ENCODE measurements at regions of chr10 and their contacts with region 1.

Region 1: DNA sequence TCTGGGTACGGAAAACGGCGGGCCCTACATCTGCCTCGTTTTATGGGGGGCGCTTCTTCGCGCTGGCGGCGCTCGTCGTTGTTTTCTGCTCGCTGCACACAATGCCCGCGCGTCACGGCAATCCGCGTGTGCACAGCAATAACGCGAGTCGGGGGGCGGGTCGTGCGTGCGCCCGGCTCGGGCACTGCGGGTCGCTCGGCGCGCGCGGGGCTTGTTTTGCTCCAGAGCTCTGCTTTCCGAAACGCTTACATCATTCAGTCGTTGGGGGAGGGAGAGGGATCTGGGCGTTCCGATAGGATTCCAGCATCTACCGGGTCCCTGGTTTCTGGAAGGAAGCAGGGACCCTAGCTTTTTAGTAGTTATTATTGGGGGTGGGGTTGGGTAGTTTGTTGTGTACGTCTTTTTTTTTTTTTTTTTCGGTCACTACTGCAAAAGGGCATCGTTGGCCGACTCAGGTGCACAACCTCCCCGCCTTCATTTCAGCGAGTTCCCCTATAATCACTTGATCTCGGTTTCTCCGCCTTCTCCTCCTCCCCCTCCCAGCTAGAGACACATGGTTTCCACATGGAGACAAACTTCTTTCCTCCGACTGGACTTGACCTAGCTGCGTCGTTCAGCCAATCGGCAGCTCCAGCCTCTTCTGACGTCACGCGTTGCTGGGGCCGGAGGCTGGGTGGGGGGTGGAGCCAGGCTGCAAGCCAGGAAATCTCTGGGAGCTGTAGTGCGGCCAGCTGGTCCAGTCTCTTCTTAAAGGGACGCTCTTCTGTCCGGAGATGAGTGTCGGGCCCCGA is 3.5 kb downstream of the MXI1 start:
- DNase-seq: peak; percentile 78 to 94 (median 86)
- H3K4me3 ChIP-seq: peak overlapping the region; percentile 95
- H3K4me3 Mint-ChIP-seq: peak overlapping the region; percentile 89 to 99 (median 94)
- H3K27ac ChIP-seq: peak overlapping the region; percentile 93
- H3K27ac Mint-ChIP-seq: peak overlapping the region; percentile 94 to 99 (median 98)
- H3K4me1 ChIP-seq: peaks cover 52% of the 10 kb centered on the region
- H3K4me1 Mint-ChIP-seq: peaks cover 47 to 62% (median 55%) of the 10 kb centered on the region in 3 donors
- H3K27me3 ChIP-seq: peaks cover 5% of the 10 kb centered on the region
- H3K27me3 Mint-ChIP-seq: peaks cover 4 to 14% of the 10 kb centered on the region in 2 donors

Region 2: DNA sequence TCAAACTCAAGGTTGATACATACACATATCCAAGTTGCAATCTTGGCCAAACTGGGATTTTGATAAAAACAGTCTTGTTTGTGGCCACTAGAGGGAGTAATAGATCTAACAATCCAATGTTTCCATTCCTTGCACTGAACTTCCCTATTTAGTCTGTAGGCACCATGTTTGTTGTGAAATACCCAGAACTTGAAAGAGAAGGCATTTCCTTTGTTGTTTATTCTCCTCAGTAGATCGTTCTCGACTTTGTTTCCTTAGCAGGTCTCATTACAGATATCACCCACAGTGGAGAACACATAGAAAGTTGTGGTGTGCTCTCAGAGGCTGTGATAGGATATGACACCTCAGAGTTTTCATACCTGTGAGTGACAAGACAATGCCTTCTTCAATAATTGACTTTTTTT is 73.7 kb before region 1 on chr10:
- CTCF ChIA-PET with region 1: interaction called, 53 read pairs
- POLR2A ChIA-PET with region 1: interaction called, 38 read pairs
- DNase-seq: peak in 2 of 5 donors; percentile 59 to 64
- H3K4me3 ChIP-seq: no peak overlapping the region
- H3K4me3 Mint-ChIP-seq: no peak overlapping the region
- H3K27ac ChIP-seq: no peak overlapping the region
- H3K27ac Mint-ChIP-seq: peak overlapping the region in 6 of 8 donors; percentile 0 to 82 (median 20)
- H3K4me1 ChIP-seq: peaks cover 5% of the 10 kb centered on the region
- H3K4me1 Mint-ChIP-seq: peaks cover 18 to 30% (median 27%) of the 10 kb centered on the region in 3 donors
- H3K27me3 ChIP-seq: no peaks in the 10 kb centered on the region
- H3K27me3 Mint-ChIP-seq: peaks cover 0 to 2% of the 10 kb centered on the region in 2 donors

Region 3: GRCh38 chr10:110192552-110192951 is 18.3 kb before region 1 on chr10:
- CTCF ChIA-PET with region 1: interaction called, 20 read pairs
- POLR2A ChIA-PET with region 1: interaction called, 7 read pairs
- DNase-seq: no peak
- H3K4me3 ChIP-seq: no peak overlapping the region
- H3K4me3 Mint-ChIP-seq: no peak overlapping the region
- H3K27ac ChIP-seq: no peak overlapping the region
- H3K27ac Mint-ChIP-seq: no peak overlapping the region
- H3K4me1 ChIP-seq: no peaks in the 10 kb centered on the region
- H3K4me1 Mint-ChIP-seq: peaks cover 0 to 2% (median 0%) of the 10 kb centered on the region in 3 donors
- H3K27me3 ChIP-seq: peaks cover 5% of the 10 kb centered on the region
- H3K27me3 Mint-ChIP-seq: peaks cover 42 to 74% of the 10 kb centered on the region in 2 donors

Region 4: DNA sequence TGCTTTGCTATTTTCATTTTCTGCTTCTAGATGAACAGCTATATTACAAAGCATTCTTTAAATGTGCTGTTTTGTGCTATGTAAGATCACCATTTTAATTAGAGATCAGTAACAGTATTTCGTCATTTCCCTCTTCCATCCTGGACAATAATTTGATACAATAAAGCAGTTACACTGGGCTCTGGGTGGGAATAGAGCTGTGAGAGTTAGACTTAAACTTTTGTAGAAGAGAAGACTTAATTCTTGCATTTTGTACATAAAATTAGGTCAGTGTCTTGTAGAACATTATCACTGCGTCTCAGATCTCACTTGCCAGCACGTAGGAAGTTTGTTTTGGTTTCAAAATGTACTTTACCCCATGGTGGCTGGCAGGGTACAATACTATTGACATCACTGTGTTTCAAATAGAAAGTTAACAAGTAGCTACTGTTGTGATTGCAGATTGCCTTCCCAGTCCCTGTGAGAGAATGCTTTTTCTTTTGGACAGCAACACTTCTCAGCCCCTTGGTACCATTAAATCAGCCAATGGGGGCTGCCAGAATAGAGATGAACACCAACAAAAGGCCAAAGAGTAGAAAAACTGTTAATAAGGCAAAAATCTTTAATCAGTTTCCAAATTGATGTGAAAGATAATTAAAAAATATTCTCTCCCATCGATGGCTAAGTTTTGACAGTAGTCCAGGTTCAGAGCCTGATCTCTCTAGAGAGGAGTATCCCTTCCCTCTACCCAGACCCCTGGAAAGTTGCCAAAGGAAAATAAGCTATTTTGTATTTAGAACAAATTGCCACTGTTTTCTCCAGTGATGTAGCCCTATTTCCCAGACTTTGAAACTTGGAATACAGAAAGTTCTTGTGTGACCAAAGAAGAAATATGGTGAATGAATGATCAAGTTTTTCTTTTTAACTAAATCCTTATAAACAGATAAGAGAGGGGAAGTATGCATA is 58.8 kb after region 1 on chr10:
- CTCF ChIA-PET with region 1: interaction called, 3 read pairs
- POLR2A ChIA-PET with region 1: interaction called, 10 read pairs
- DNase-seq: peak in 1 of 5 donors; percentile 25
- H3K4me3 ChIP-seq: peak overlapping the region; percentile 13
- H3K4me3 Mint-ChIP-seq: peak overlapping the region; percentile 70 to 88 (median 79)
- H3K27ac ChIP-seq: no peak overlapping the region
- H3K27ac Mint-ChIP-seq: peak overlapping the region; percentile 51 to 97 (median 85)
- H3K4me1 ChIP-seq: peaks cover 26% of the 10 kb centered on the region
- H3K4me1 Mint-ChIP-seq: peaks cover 36 to 58% (median 44%) of the 10 kb centered on the region in 3 donors
- H3K27me3 ChIP-seq: no peaks in the 10 kb centered on the region
- H3K27me3 Mint-ChIP-seq: peaks cover 0 to 1% of the 10 kb centered on the region in 2 donors

Region 5: DNA sequence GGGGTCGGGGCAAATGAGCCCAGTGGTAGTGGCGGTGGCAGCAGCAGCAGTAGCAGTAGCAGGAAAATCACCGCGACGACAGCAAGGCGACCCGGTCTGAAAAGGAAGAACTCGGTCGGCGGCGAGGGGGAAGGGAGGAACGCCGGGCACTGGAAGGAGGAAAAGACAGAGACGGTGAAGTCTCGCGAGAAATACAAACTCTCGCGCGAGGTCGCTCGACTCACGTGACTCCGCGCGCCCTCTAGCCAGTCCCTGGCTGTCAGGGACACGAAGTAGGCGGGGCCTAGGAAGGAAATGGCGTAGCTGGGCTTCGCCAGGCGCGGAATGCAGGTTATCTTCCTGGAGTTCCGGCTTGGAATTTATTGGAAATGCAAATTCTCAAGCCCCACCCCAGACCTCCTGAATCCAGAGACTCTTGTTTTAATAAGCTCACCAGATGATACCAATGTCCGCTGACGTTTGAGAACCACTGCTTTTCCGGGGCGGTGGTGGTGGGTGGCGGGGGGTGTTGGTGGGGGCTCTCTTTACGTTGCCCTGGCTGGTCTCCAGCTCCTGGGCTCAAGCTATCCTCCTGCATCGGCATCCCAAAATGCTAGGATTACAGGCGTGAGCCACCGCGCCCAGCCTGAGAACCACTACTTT is 94.0 kb after region 1 on chr10 and contains the start of gene SMNDC1:
- CTCF ChIA-PET with region 1: interaction called, 11 read pairs
- POLR2A ChIA-PET with region 1: interaction called, 22 read pairs
- DNase-seq: peak; percentile 95 to 98 (median 96)
- H3K4me3 ChIP-seq: peak within 1 kb of the TSS; percentile 70
- H3K4me3 Mint-ChIP-seq: peak within 1 kb of the TSS; percentile 93 to 99 (median 98)
- H3K27ac ChIP-seq: peak within 1 kb of the TSS; percentile 80
- H3K27ac Mint-ChIP-seq: peak within 1 kb of the TSS; percentile 92 to 99 (median 99)
- H3K4me1 ChIP-seq: peaks cover 50% of the 10 kb centered on the region
- H3K4me1 Mint-ChIP-seq: peaks cover 49 to 59% (median 55%) of the 10 kb centered on the region in 3 donors
- H3K27me3 ChIP-seq: no peaks in the 10 kb centered on the region
- H3K27me3 Mint-ChIP-seq: peaks cover 0 to 4% of the 10 kb centered on the region in 2 donors
- total RNA-seq, gene SMNDC1: 54.9 to 60.1 TPM